Posterior vena cava (tissue), 2 donors: ENCODE measurements at regions of chr2 and their contacts with region 1.

Region 1: DNA sequence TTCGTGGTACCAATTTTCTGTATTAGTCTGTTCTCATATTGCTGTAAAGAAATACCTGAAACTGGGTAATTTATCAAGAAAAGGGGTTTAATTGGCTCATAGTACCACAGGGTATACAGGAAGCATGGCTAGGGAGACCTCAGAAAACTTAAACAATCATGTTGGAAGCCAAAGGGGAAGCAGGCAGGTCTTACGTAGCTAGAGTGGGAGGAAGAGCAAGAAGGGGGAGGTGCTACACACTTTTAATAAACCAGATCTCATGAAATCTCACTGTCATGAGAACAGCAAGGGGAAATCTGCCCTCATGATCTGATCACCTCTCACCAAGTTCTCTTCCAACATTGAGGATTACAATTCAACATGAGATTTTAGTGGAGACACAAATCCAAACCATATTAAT is 226.8 kb upstream of the TPO start:
- DNase-seq: no peak

Region 2: GRCh38 chr2:1246239-1246638 is 59.8 kb after region 1 on chr2:
- intact Hi-C with region 1: no loop called
- DNase-seq: no peak

Region 3: DNA sequence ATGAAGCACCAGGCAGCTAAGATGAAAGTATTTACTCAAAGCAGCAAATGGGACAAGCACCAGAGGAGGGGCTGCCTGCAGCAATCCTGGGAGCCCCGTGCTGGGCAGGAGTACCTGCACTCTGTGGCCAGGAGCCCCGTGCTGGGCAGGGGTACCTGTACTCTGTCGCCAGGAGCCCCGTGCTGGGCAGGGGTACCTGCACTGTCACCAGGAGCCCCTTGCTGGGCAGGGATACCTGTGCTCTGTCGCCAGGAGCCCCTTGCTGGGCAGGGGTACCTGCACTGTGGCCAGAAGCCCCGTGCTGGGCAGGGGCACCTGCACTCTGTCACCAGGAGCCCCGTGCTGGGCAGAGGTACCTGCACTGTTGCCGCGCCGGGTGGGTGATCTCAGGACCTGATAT is 986.1 kb after region 1 on chr2:
- intact Hi-C with region 1: loop called in 1 of 2 experiments (anchors 5 kb)
- DNase-seq: no peak